Activated CD4-positive, alpha-beta T cell treated with anti-CD3 and anti-CD28 coated beads, Interleukin-2, amount 10 ng/mL, durations not matched to agents 24 days and 14 days (primary cell): ENCODE measurements at regions of chr4 and their contacts with region 1.

Region 1: DNA sequence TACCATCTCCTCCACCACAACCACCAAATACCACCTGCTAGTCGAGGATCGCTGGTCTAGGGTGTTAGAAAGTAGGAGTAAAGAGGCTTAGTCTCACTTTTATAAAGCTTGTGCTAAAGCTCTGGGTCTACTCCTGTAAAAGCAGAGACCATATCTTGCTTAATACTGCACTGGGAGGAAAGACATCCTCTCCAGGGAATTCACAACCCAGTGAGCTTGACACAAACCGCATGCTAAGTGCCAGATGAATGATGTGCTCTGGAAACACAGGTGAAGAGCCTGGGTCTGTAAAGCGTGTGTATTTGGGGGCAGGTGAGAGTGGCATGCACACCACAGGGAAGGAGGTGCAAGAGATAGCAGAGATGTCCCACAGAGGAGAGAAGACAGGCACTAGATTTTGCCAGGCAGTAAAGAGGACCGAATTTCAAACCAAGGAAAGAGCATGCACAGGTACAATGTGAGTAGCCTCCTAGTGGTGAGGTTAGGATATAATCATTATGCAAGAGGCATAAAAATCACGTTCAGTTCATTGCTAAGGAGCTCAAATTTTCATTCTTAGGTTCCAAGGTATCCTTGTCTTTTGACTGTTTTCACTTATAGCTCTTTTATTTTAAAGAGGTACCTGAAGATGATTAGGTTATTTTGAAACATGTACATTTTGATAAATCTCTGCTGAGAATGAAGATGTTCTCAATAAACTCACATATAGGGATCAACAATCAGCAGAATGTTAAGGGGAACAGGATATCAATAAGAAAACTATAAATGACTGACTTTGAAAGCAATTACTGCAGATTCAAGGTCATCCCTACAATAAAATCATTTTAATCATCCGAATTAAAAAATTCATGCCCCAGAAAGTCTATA is 20.7 kb downstream of the TAPT1 start:
- DNase-seq: no peak
- H3K4me3 Mint-ChIP-seq: no peak overlapping the region
- H3K27ac Mint-ChIP-seq: peak overlapping the region; percentile 39
- H3K4me1 Mint-ChIP-seq: peaks cover 30% of the 10 kb centered on the region
- H3K27me3 Mint-ChIP-seq: no peaks in the 10 kb centered on the region

Region 2: GRCh38 chr4:16026160-16026761 is 179.3 kb before region 1 on chr4:
- intact Hi-C with region 1: loop called (anchors 2 kb)
- DNase-seq: peak; percentile 80
- H3K4me3 Mint-ChIP-seq: no peak overlapping the region
- H3K27ac Mint-ChIP-seq: no peak overlapping the region
- H3K4me1 Mint-ChIP-seq: no peaks in the 10 kb centered on the region
- H3K27me3 Mint-ChIP-seq: peaks cover 21% of the 10 kb centered on the region

Region 3: DNA sequence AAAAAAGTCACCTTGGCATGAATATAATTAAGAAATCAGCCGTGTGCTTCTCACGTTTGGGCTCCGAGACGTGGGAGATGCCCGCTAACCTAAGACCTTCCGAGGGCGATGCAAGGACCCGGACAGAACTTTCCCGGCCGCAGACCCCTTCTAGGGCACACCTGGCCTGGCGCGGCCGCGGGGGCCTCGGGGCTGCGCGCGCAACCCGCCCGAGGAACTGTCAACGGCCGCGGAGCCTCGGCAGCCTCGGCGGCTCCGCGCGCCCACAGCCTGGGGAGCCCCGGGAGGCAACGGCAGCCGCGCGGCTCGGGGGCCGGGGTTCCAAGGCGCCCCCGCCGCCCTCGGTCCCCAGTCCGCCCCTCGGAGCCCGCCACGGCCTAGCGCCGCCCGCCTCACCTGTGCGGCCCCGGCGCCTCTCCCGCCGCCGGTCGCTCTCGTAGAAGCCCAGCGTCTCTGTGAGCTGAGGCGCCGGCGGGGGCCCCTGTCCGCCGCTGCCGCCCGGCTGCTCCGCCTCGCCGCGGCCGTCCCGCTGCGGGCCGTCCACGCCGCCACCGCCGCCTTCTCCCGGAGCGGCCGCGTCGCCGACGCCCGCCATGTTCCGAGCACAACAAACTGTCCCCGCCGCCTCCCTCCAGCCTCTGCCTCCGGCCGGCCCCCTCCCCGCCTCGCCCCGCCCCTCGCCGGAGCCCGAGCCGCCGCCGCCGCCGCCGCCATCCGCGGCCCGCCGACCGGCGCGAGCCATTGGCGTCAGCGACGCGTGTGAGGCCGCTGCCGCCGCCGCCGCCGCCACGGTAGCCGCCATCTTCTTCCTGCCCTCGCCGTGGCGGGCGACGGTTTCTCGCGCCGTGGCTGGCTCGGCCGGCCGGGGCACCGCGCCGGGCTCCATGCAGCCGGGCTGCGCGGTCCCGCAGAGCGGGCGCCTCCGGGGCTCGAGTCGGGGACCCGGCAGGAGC is 20.6 kb after region 1 on chr4 and contains the start of gene TAPT1:
- intact Hi-C with region 1: loop called (anchors 2 kb)
- DNase-seq: peak; percentile 94
- H3K4me3 Mint-ChIP-seq: peak within 1 kb of the TSS; percentile 90
- H3K27ac Mint-ChIP-seq: peak within 1 kb of the TSS; percentile 98
- H3K4me1 Mint-ChIP-seq: peaks cover 45% of the 10 kb centered on the region
- H3K27me3 Mint-ChIP-seq: no peaks in the 10 kb centered on the region
- total RNA-seq, gene TAPT1: 27.2 and 29.3 TPM in 2 replicates

Region 4: GRCh38 chr4:16264798-16265197 is 59.3 kb after region 1 on chr4:
- intact Hi-C with region 1: loop called (anchors 2 kb)
- DNase-seq: no peak
- H3K4me3 Mint-ChIP-seq: no peak overlapping the region
- H3K27ac Mint-ChIP-seq: no peak overlapping the region
- H3K4me1 Mint-ChIP-seq: peaks cover 2% of the 10 kb centered on the region
- H3K27me3 Mint-ChIP-seq: peaks cover 2% of the 10 kb centered on the region

Region 5: DNA sequence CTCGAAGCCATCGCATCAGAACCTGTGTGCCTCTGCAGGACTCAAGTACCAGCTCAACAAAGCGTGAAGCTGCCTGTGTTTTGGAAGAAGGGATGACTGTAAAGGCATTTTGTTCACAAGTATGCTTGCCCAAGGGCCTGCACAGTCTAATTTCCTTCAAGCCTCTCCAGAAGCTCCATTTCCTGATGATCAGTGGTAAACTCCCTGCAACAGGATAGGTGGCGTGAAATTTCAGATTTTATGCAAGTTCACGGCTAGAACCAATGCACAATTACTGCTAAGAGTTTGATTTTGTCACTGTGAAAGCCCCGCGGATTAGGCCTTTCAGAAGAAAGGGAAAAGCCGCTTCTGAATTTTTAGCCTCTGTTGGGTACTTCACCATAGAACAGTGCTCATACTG is 109.9 kb after region 1 on chr4:
- intact Hi-C with region 1: no loop called
- DNase-seq: no peak
- H3K4me3 Mint-ChIP-seq: no peak overlapping the region
- H3K27ac Mint-ChIP-seq: no peak overlapping the region
- H3K4me1 Mint-ChIP-seq: no peaks in the 10 kb centered on the region
- H3K27me3 Mint-ChIP-seq: peaks cover 1% of the 10 kb centered on the region

Region 6: GRCh38 chr4:16431866-16432265 is 226.3 kb after region 1 on chr4:
- intact Hi-C with region 1: no loop called
- DNase-seq: no peak
- H3K4me3 Mint-ChIP-seq: no peak overlapping the region
- H3K27ac Mint-ChIP-seq: no peak overlapping the region
- H3K4me1 Mint-ChIP-seq: no peaks in the 10 kb centered on the region
- H3K27me3 Mint-ChIP-seq: no peaks in the 10 kb centered on the region